Tibial artery (tissue), 4 donors: ENCODE measurements at regions of chr19 and their contacts with region 1.

Region 1: GRCh38 chr19:19404879-19405860 is at the start of gene GATAD2A:
- DNase-seq: peak; percentile 92 to 97
- H3K4me3 ChIP-seq: peak within 1 kb of the TSS; percentile 75 to 89
- H3K27ac ChIP-seq: peak within 1 kb of the TSS; percentile 85 to 88
- H3K4me1 ChIP-seq: peaks cover 0 to 62% (median 37%) of the 10 kb centered on the region in 4 donors
- H3K27me3 ChIP-seq: no peaks in the 10 kb centered on the region
- CTCF ChIP-seq: peak; percentile 16 to 26

Region 2: GRCh38 chr19:19366612-19367396 is 38.4 kb before region 1 on chr19:
- intact Hi-C with region 1: loop called (anchors 5 kb)
- DNase-seq: peak; percentile 55 to 80
- H3K4me3 ChIP-seq: no peak overlapping the region
- H3K27ac ChIP-seq: peak overlapping the region in 1 of 2 donors; percentile 4
- H3K4me1 ChIP-seq: peaks cover 0 to 19% (median 4%) of the 10 kb centered on the region in 4 donors
- H3K27me3 ChIP-seq: no peaks in the 10 kb centered on the region
- CTCF ChIP-seq: peak; percentile 89 to 95

Region 3: DNA sequence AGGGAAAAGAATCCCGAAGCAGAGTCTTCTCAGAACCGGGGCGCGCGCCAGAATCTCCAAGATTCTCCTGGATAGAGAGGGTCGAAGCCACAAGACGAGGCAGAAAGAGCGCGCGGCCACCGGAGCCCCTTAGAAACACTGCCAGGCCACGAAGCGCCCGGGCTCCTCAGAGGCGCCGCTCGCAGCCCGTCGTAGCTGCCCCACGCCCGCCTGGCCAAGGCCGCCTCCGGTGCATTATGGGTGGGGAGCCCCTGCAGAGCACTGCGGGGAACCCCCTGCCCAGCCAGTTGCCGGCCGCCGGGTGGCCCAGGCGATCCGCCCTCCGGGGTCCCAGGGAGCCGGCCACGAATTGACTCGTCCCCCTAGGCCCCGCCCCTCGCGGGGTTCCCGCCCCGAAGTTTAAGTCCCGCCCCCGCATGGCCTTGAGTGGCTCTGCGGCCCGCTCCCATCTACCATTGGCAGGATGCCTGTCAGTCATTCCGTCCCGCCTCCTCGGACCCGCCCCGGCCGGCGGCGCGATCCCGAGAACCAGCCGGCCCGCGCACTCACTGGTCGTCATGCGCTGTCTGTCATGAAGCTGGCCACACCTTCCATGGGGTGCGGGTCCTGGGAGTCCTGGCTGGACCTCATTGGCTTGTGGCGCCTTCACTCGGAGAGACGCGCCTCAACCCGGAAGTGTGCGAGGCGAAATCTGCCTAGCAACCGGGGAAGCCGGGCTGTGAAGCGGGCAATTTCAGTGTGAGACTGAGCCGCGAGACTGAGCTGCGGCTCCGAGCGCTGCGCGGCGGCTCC is 19.9 kb before region 1 on chr19:
- intact Hi-C with region 1: loop called (anchors 2 kb)
- DNase-seq: peak; percentile 100
- H3K4me3 ChIP-seq: peak overlapping the region; percentile 74
- H3K27ac ChIP-seq: peak overlapping the region; percentile 84
- H3K4me1 ChIP-seq: peaks cover 0 to 52% (median 47%) of the 10 kb centered on the region in 4 donors
- H3K27me3 ChIP-seq: no peaks in the 10 kb centered on the region
- CTCF ChIP-seq: peak; percentile 16 to 29

Region 4: GRCh38 chr19:19459707-19460251 is 54.6 kb after region 1 on chr19:
- intact Hi-C with region 1: loop called (anchors 10 kb)
- DNase-seq: peak in 1 of 2 donors; percentile 61
- H3K4me3 ChIP-seq: no peak overlapping the region
- H3K27ac ChIP-seq: peak overlapping the region; percentile 74 to 80
- H3K4me1 ChIP-seq: peaks cover 27 to 68% (median 59%) of the 10 kb centered on the region in 4 donors
- H3K27me3 ChIP-seq: no peaks in the 10 kb centered on the region
- CTCF ChIP-seq: no peak

Region 5: GRCh38 chr19:19488875-19489690 is 83.9 kb after region 1 on chr19:
- intact Hi-C with region 1: no loop called
- DNase-seq: peak; percentile 84 to 93
- H3K4me3 ChIP-seq: peak overlapping the region; percentile 32 to 37
- H3K27ac ChIP-seq: peak overlapping the region; percentile 78 to 86
- H3K4me1 ChIP-seq: peaks cover 0 to 50% (median 29%) of the 10 kb centered on the region in 4 donors
- H3K27me3 ChIP-seq: no peaks in the 10 kb centered on the region
- CTCF ChIP-seq: no peak